PC-9 (cell line): ENCODE measurements at regions of chr13 and their contacts with region 1.

Region 1: GRCh38 chr13:59492030-59492636 is 671.6 kb downstream of the DIAPH3 start:
- DNase-seq: no peak
- H3K4me3 ChIP-seq: no peak overlapping the region
- H3K27ac ChIP-seq: no peak overlapping the region
- H3K4me1 ChIP-seq: no peaks in the 10 kb centered on the region
- H3K27me3 ChIP-seq: no peaks in the 10 kb centered on the region
- CTCF ChIP-seq: no peak

Region 2: GRCh38 chr13:57527114-57527735 is 1964.9 kb before region 1 on chr13:
- CTCF ChIA-PET with region 1: no interaction called
- POLR2A ChIA-PET with region 1: interaction called, 24 read pairs
- intact Hi-C with region 1: no loop called
- DNase-seq: no peak
- H3K4me3 ChIP-seq: no peak overlapping the region
- H3K27ac ChIP-seq: no peak overlapping the region
- H3K4me1 ChIP-seq: no peaks in the 10 kb centered on the region
- H3K27me3 ChIP-seq: no peaks in the 10 kb centered on the region
- CTCF ChIP-seq: no peak